Esophagus muscularis mucosa (tissue), 4 donors: ENCODE measurements at regions of chr19 and their contacts with region 1.

Region 1: DNA sequence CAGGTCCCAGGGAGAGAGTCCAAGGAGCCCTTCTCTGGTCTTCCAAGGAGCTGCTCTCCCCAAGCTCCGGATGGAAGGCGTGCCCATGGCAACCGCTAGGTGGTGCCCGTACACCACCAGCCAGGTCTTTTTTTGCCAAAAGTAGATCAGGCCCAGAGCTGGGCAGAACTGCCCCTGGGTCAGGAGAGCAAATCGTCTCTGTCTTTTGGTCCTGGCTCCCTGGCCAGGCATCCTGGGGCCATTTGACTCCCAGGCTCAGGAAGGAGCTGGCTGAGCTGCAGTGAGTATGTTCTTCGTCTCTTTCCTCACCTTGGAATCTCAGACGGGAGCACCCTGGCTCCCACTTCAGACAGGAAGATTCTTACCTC is 24.6 kb upstream of the BCL3 start:
- DNase-seq: peak; percentile 95
- H3K4me3 ChIP-seq: no peak overlapping the region
- H3K27ac ChIP-seq: peak overlapping the region in 2 of 4 donors; percentile 21 to 49
- H3K4me1 ChIP-seq: peaks cover 33 to 43% (median 39%) of the 10 kb centered on the region in 4 donors
- H3K27me3 ChIP-seq: no peaks in the 10 kb centered on the region
- CTCF ChIP-seq: peak; percentile 95 to 98 (median 97)
- EP300 ChIP-seq: no peak
- POLR2A ChIP-seq: no peak

Region 2: GRCh38 chr19:44770550-44771257 is 46.8 kb after region 1 on chr19:
- intact Hi-C with region 1: loop called (anchors 1 kb)
- DNase-seq: peak; percentile 97
- H3K4me3 ChIP-seq: no peak overlapping the region
- H3K27ac ChIP-seq: no peak overlapping the region
- H3K4me1 ChIP-seq: peaks cover 0 to 12% (median 7%) of the 10 kb centered on the region in 4 donors
- H3K27me3 ChIP-seq: peaks cover 0 to 3% (median 0%) of the 10 kb centered on the region in 4 donors
- CTCF ChIP-seq: peak; percentile 89 to 92 (median 90)
- EP300 ChIP-seq: no peak
- POLR2A ChIP-seq: no peak